Right ventricle myocardium inferior (tissue), 1 donor: ENCODE measurements at regions of chr14 and their contacts with region 1.

Region 1: GRCh38 chr14:89899917-89900663 is 54.4 kb downstream of the EFCAB11 start:
- DNase-seq: no peak
- ATAC-seq: no peak

Region 2: DNA sequence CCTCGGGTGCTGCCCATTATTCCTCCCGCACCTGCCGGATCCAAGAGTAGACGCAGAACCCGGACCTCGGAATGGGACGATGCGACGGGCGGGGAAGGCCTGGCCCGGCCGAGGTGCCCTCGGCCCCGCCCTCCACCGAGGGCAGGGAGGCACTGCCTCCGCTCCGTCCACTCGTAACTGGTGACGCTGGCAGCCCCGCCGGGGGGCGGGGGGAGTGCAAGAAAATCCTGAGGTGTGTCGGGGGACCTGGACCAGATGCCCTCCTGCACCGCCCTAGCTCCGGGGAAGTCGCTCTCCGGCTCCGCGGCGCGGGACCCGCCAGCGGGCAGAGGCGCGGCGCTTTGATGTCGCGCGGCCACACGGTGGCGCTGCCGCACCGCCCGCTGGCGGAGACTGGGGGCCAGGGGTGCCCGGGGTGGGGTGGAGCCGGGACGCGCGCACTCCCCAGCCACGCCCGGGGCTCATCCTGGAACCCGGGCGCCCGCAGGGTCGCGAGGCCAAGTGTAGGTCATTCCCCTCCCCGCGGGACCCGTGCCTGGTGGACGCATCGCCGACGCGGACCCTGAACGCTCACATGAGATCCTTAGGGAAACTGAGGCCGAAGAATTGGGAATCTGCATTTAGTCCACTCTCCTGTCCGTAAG is 872.9 kb before region 1 on chr14:
- intact Hi-C with region 1: loop called (anchors 5 kb)
- DNase-seq: peak; percentile 78
- ATAC-seq: peak; percentile 85

Region 3: GRCh38 chr14:89690139-89690538 is 210.0 kb before region 1 on chr14:
- intact Hi-C with region 1: no loop called
- DNase-seq: no peak
- ATAC-seq: peak; percentile 10

Region 4: GRCh38 chr14:89870316-89870715 is 29.8 kb before region 1 on chr14:
- intact Hi-C with region 1: no loop called
- DNase-seq: no peak
- ATAC-seq: no peak

Region 5: DNA sequence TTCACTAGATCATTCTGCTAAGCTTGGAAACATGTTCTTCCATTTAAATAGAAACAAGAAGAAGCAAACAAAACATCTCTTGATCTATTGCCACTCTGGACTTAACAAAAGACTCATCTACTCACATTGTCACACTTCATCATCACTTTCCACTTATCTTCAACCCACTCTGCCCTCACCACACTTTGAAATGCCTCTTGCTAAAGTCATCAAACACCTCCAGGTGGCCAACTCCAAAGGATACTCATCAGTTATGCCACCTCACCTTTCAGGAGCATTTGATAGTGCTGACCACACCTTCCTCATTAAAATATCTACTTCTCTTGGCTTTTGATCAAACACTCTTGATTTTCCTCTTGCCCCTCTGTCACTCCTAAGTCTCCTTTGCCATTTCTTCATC is 47.3 kb after region 1 on chr14:
- intact Hi-C with region 1: no loop called
- DNase-seq: no peak
- ATAC-seq: no peak

Region 6: GRCh38 chr14:90019824-90020523 is 119.9 kb after region 1 on chr14:
- intact Hi-C with region 1: no loop called
- DNase-seq: no peak
- ATAC-seq: no peak